ENCODE measurements at regions of chr5 and their contacts with region 1.

Region 1: DNA sequence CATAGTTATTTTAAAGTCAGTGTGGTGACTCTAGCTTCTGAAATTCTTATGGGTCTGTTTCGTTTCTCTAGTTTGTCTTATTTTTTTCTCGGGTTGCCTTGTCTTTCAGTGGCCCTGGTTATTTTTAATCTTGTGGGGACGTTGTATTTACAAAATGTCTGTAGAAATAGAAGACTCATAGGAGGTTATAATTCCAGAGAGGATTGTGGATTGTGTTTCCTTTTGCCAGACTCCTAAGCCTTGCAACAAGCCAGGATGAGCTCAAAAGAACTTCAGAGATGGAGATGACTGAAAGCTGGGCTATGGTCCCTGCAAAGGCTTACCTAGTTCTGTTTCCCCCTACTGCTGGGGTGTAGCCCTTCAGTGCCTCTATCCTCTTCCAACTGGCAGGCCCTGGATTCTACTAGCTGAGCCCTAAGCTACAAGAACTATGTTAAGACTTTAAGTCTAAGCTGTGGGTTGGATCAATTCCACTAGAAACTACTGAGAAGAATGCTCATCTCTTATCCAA is 32.2 kb upstream of the LECT2 start:
- DNase-seq: no peak
- ATAC-seq: no peak
- H3K4me3 ChIP-seq: no peak overlapping the region
- H3K27ac ChIP-seq: no peak overlapping the region
- H3K4me1 ChIP-seq: peaks cover 10% of the 10 kb centered on the region
- H3K27me3 ChIP-seq: no peaks in the 10 kb centered on the region
- CTCF ChIP-seq: no peak
- EP300 ChIP-seq: no peak
- POLR2A ChIP-seq: no peak
- RAD21 ChIP-seq: no peak

Region 2: GRCh38 chr5:135895551-135895950 is 91.4 kb before region 1 on chr5 and contains the start of gene IL9:
- CTCF ChIA-PET with region 1: no interaction called
- POLR2A ChIA-PET with region 1: no interaction called
- in situ Hi-C with region 1: no loop called
- intact Hi-C with region 1: loop called (anchors 2 kb)
- DNase-seq: no peak
- ATAC-seq: peak; percentile 31; the same call in 1 of the 3 replicates
- H3K4me3 ChIP-seq: no peak within 1 kb of the TSS
- H3K27ac ChIP-seq: no peak within 1 kb of the TSS
- H3K4me1 ChIP-seq: peaks cover 16% of the 10 kb centered on the region
- H3K27me3 ChIP-seq: peaks cover 0 to 14% of the 10 kb centered on the region in 2 experiments; a peak in 3 of 5 replicates
- CTCF ChIP-seq: no peak
- EP300 ChIP-seq: no peak
- POLR2A ChIP-seq: no peak
- RAD21 ChIP-seq: no peak
- total RNA-seq, gene IL9: not detected in 2 replicates

Region 3: GRCh38 chr5:135964670-135965320 is 22.2 kb before region 1 on chr5:
- CTCF ChIA-PET with region 1: no interaction called
- POLR2A ChIA-PET with region 1: no interaction called
- in situ Hi-C with region 1: no loop called
- intact Hi-C with region 1: no loop called
- DNase-seq: no peak
- ATAC-seq: no peak
- H3K4me3 ChIP-seq: no peak overlapping the region
- H3K27ac ChIP-seq: no peak overlapping the region
- H3K4me1 ChIP-seq: no peaks in the 10 kb centered on the region
- H3K27me3 ChIP-seq: no peaks in the 10 kb centered on the region
- CTCF ChIP-seq: no peak
- EP300 ChIP-seq: no peak
- POLR2A ChIP-seq: no peak
- RAD21 ChIP-seq: no peak

Measured in HepG2 (cell line).